ENCODE measurements at regions of chr2 and their contacts with region 1.

Region 1: DNA sequence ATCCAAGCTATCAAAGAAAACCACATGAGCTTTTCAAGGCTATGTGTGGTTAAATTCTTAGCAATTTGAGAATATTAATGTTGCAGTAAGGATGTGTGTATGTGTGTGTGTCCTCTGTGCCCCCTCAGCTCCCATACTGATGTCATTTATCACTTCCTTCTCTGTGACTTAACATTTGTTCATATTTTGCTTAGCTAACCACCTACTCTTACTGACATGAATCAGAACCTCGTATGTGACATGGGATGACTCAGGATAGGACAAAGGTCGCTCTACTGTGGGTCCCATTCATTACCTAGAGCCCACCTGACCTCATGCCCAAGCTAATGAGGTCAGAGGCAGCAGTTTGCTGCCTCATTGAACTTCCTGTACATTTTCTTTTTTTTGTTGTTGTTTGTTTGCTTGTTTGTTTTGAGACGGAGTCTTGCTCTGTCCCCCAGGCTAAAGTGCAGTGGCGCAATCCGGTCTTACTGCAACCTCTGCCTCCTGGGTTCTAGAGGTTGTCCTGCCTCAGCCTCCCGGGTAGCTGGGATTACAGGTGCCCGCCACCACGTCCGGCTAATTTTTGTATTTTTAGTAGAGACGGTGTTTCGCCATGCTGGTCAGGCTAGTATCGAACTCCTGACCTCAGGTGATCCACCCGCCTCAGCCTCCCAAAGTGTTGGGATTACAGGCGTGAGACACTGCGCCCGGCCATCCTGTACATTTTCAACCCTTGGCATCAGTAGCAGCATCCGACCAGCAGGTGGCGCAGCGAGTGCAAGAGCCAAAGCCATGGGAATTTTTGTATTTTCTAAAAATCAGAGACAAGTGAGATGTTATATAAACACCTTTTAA is 36.4 kb downstream of the MOGAT1 start:
- DNase-seq: peak; percentile 81 to 96 (median 87)
- H3K4me3 ChIP-seq: no peak overlapping the region
- H3K4me3 Mint-ChIP-seq: peak overlapping the region; percentile 39 to 62
- H3K27ac ChIP-seq: peak overlapping the region in 1 of 2 donors; percentile 29
- H3K27ac Mint-ChIP-seq: peak overlapping the region; percentile 23 to 92 (median 91)
- H3K4me1 ChIP-seq: peaks cover 19 to 21% of the 10 kb centered on the region in 2 donors
- H3K4me1 Mint-ChIP-seq: peaks cover 35% of the 10 kb centered on the region
- H3K27me3 ChIP-seq: no peaks in the 10 kb centered on the region
- H3K27me3 Mint-ChIP-seq: peaks cover under 1 to 1% (median under 1%) of the 10 kb centered on the region in 3 donors
- CTCF ChIP-seq: peak; percentile 93

Region 2: DNA sequence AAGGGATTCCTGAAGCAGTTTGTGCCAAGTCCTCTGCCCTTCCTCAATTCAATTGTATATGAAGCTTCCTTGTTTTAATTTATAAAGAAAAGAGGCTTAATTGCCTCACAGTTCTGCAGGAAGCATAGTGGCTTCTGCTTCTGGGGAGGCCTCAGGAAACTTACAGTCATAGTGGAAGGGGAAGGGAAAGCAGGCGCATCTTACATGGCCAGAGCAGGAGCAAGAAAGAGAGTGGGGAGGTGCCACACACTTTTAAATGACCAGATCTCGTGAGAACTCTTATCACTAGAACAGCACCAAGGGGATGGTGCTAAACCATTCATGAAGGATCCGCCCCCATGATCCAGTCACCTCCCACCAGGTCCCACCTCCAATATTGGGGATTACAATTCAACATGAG is 169.4 kb before region 1 on chr2:
- intact Hi-C with region 1: no loop called
- DNase-seq: no peak
- H3K4me3 ChIP-seq: no peak overlapping the region
- H3K4me3 Mint-ChIP-seq: no peak overlapping the region
- H3K27ac ChIP-seq: no peak overlapping the region
- H3K27ac Mint-ChIP-seq: no peak overlapping the region
- H3K4me1 ChIP-seq: no peaks in the 10 kb centered on the region
- H3K4me1 Mint-ChIP-seq: peaks cover 4% of the 10 kb centered on the region
- H3K27me3 ChIP-seq: peaks cover 0 to 5% of the 10 kb centered on the region in 2 donors
- H3K27me3 Mint-ChIP-seq: peaks cover 8 to 10% (median 8%) of the 10 kb centered on the region in 3 donors
- CTCF ChIP-seq: no peak

Region 3: GRCh38 chr2:222669353-222669752 is 38.6 kb before region 1 on chr2:
- intact Hi-C with region 1: loop called in 1 of 2 experiments (anchors 5 kb)
- DNase-seq: no peak
- H3K4me3 ChIP-seq: peak overlapping the region in 1 of 3 experiments; percentile 25
- H3K4me3 Mint-ChIP-seq: no peak overlapping the region
- H3K27ac ChIP-seq: peak overlapping the region in 1 of 2 donors; percentile 84
- H3K27ac Mint-ChIP-seq: peak overlapping the region; percentile 82 to 96 (median 88)
- H3K4me1 ChIP-seq: peaks cover 56 to 67% of the 10 kb centered on the region in 2 donors
- H3K4me1 Mint-ChIP-seq: peaks cover 58% of the 10 kb centered on the region
- H3K27me3 ChIP-seq: peaks cover 5 to 16% of the 10 kb centered on the region in 2 donors
- H3K27me3 Mint-ChIP-seq: peaks cover 5 to 20% (median 8%) of the 10 kb centered on the region in 3 donors
- CTCF ChIP-seq: no peak

Region 4: GRCh38 chr2:222860740-222861410 is 153.0 kb after region 1 on chr2 and contains the start of gene ACSL3:
- intact Hi-C with region 1: loop called in 1 of 2 experiments (anchors 5 kb)
- DNase-seq: peak; percentile 89 to 94 (median 91)
- H3K4me3 ChIP-seq: peak within 1 kb of the TSS; percentile 75 to 96 (median 80)
- H3K4me3 Mint-ChIP-seq: peak within 1 kb of the TSS in 1 of 2 donors; percentile 75
- H3K27ac ChIP-seq: peak within 1 kb of the TSS; percentile 53 to 85
- H3K27ac Mint-ChIP-seq: peak within 1 kb of the TSS; percentile 76 to 96 (median 83)
- H3K4me1 ChIP-seq: peaks cover 29 to 31% of the 10 kb centered on the region in 2 donors
- H3K4me1 Mint-ChIP-seq: peaks cover 13% of the 10 kb centered on the region
- H3K27me3 ChIP-seq: no peaks in the 10 kb centered on the region
- H3K27me3 Mint-ChIP-seq: peaks cover 0 to 3% (median 0%) of the 10 kb centered on the region in 3 donors
- CTCF ChIP-seq: peak; percentile 12
- polyA plus RNA-seq, gene ACSL3: 8.8 to 24.4 (median 19.9) TPM

Measured in CD14-positive monocyte (primary cell).